PC-3 (cell line): ENCODE measurements at regions of chr4 and their contacts with region 1.

Region 1: DNA sequence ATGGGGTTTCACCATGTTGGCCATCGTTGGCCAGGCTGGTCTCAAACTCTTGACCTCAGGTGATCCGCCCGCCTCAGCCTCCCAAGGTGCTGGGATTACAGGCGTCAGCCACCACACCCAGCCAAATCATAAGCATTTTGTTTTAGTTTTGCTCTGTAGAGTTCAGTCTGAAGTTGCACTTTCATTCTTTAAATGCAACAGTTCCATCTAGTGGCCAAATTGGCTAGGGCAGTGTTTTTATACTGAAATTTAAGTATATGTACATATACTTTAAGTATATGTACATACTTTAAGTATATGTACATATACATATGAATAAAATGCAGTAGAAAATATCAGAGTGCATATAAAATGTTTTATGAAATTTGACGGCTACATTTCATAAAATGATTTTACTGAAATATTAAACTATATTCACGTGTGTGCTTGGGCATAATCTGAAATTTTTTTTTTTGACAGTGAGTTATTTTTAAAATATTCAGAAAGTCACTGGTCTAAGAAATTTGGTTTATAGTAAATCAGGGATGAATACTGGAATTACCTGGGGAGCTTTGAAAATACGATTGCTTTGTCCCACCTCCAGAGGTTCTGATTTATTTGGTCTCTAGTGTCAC is 145.5 kb downstream of the NWD2 start:
- DNase-seq: peak; percentile 85
- ATAC-seq: peak; percentile 60; the same call in 1 of the 2 replicates
- H3K4me3 ChIP-seq: no peak overlapping the region
- H3K27ac ChIP-seq: no peak overlapping the region
- H3K4me1 ChIP-seq: peaks cover 8% of the 10 kb centered on the region; the same call in 1 of the 2 replicates
- H3K27me3 ChIP-seq: 0 out of 2 replicates have a peak, but pooled peaks cover 6% of the 10 kb centered on the region
- CTCF ChIP-seq: peak; percentile 62

Region 2: GRCh38 chr4:36414248-36414647 is 975.8 kb before region 1 on chr4:
- CTCF ChIA-PET with region 1: interaction called, 10 read pairs
- POLR2A ChIA-PET with region 1: no interaction called
- intact Hi-C with region 1: loop called (anchors 1 kb)
- DNase-seq: peak; percentile 18
- ATAC-seq: no peak
- H3K4me3 ChIP-seq: no peak overlapping the region
- H3K27ac ChIP-seq: no peak overlapping the region
- H3K4me1 ChIP-seq: no peaks in the 10 kb centered on the region
- H3K27me3 ChIP-seq: peaks cover 36% of the 10 kb centered on the region
- CTCF ChIP-seq: peak; percentile 62